ENCODE measurements at regions of chr7 and their contacts with region 1.

Region 1: GRCh38 chr7:101138213-101138870 is 11.4 kb downstream of the SERPINE1 start:
- DNase-seq: peak; percentile 91 to 98
- H3K4me3 ChIP-seq: peak overlapping the region in 1 of 2 donors; percentile 13
- H3K27ac ChIP-seq: peak overlapping the region; percentile 72 to 87
- H3K4me1 ChIP-seq: peaks cover 6 to 15% of the 10 kb centered on the region in 2 donors
- H3K27me3 ChIP-seq: no peaks in the 10 kb centered on the region
- CTCF ChIP-seq: peak; percentile 82 to 90 (median 85)

Region 2: DNA sequence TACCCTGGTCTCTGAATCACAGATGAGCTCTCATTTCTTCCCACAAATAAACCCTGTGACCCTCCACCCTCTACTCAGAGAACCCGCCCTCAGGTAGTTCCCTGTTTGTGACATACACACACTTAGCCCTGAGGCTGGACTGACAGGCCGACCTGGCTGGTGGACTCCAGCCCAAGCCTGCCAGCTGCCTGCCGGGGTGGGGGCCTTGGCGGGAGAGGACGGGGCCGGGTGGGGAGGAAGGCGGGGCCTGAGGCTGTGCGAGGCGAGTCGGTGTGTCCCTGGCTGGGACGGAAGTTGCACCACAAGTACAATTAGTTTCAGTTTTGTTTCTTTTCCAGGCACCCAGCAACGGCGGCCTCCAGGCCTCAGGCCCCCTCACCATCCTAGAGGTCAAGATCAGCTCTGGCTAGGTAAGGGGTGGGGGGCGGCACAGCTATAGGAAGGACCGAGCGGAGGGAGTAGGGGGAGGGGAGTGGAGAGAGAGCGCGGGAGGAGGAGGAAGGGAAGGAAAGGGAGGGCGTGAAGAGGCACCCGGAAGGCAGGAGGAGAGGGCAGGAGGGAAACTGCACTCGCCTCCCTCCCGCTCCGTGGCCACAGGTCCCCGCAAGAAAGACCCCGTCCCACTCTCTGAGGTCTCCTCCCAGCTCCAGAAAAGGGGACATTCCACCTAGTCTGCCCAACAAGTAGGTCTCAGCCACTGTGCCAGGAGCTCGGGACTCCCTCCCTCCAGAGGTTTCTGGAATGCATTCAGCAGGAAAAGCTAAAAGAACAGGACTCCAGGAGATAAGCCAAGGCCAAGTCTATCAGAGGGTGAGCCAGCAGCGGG is 53.0 kb before region 1 on chr7 and contains the start of gene TRIM56:
- intact Hi-C with region 1: loop called (anchors 1 kb)
- DNase-seq: peak; percentile 68 to 94
- H3K4me3 ChIP-seq: peak within 1 kb of the TSS; percentile 75 to 77
- H3K27ac ChIP-seq: peak within 1 kb of the TSS; percentile 88 to 92
- H3K4me1 ChIP-seq: peaks cover 6 to 27% of the 10 kb centered on the region in 2 donors
- H3K27me3 ChIP-seq: no peaks in the 10 kb centered on the region
- CTCF ChIP-seq: no peak
- total RNA-seq, gene TRIM56: 29.6 TPM

Region 3: GRCh38 chr7:101094416-101095375 is 43.6 kb before region 1 on chr7:
- intact Hi-C with region 1: loop called (anchors 1 kb)
- DNase-seq: peak in 1 of 2 donors; percentile 77
- H3K4me3 ChIP-seq: no peak overlapping the region
- H3K27ac ChIP-seq: peak overlapping the region; percentile 19 to 48
- H3K4me1 ChIP-seq: peaks cover 10 to 23% of the 10 kb centered on the region in 2 donors
- H3K27me3 ChIP-seq: no peaks in the 10 kb centered on the region
- CTCF ChIP-seq: peak; percentile 60 to 73 (median 67)

Region 4: DNA sequence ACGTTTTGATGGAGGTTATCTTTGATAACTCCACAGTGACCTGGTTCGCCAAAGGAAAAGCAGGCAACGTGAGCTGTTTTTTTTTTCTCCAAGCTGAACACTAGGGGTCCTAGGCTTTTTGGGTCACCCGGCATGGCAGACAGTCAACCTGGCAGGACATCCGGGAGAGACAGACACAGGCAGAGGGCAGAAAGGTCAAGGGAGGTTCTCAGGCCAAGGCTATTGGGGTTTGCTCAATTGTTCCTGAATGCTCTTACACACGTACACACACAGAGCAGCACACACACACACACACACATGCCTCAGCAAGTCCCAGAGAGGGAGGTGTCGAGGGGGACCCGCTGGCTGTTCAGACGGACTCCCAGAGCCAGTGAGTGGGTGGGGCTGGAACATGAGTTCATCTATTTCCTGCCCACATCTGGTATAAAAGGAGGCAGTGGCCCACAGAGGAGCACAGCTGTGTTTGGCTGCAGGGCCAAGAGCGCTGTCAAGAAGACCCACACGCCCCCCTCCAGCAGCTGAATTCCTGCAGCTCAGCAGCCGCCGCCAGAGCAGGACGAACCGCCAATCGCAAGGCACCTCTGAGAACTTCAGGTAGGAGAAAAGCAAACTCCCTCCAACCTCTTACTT is 11.6 kb before region 1 on chr7 and contains the start of gene SERPINE1:
- intact Hi-C with region 1: loop called (anchors 1 kb)
- DNase-seq: peak; percentile 93 to 99
- H3K4me3 ChIP-seq: peak within 1 kb of the TSS; percentile 56 to 71
- H3K27ac ChIP-seq: peak within 1 kb of the TSS; percentile 96 to 98
- H3K4me1 ChIP-seq: peaks cover 12 to 65% of the 10 kb centered on the region in 2 donors
- H3K27me3 ChIP-seq: no peaks in the 10 kb centered on the region
- CTCF ChIP-seq: peak in 1 of 3 experiments; percentile 24
- total RNA-seq, gene SERPINE1: 1,267 TPM

Region 5: GRCh38 chr7:101185258-101185839 is 47.0 kb after region 1 on chr7:
- intact Hi-C with region 1: no loop called
- DNase-seq: no peak
- H3K4me3 ChIP-seq: no peak overlapping the region
- H3K27ac ChIP-seq: no peak overlapping the region
- H3K4me1 ChIP-seq: no peaks in the 10 kb centered on the region
- H3K27me3 ChIP-seq: peaks cover 1% of the 10 kb centered on the region
- CTCF ChIP-seq: no peak

Region 6: DNA sequence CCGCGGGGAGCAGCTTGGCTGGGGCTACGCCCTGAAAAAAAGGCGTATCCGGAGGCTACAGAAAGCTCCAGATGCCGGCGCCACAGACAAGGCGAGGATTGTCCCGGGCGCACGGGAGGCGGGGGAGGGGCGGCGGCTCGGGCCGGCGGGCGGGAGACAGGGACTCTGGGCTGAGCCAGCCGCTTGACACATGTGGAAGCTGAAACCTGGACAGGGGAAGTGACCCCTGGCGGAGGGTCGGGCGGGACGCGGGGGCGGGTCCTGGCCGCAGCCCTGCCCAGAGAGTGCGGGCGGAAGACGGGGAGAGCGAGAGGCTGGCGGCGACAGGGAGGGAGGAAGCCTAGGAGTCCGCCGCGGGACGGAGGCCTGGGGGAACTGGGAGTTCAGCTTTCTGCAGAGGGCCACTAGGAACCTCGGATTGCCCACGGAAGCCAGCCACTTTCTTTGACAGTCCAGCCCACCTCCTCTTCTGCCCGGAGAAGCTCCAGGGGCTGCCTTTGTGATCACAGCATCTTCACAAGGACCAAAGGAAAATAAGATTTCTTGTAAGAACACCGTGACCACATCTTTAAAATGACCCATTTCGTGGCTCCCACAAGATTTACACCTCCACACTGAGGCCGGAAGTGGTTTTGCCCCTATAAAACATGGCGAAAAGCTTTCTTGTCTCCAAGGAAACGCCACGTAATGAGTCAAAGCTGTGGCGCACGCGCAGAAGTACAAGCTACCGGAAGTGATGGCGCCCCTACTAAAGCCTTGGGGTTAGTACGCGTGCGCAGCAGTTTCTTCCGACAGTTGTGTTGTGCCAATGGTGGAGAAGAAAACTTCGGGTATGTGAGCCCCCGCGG is 79.3 kb after region 1 on chr7 and contains the starts of genes PLOD3 and ZNHIT1:
- intact Hi-C with region 1: no loop called
- DNase-seq: peak; percentile 84 to 98
- H3K4me3 ChIP-seq: peak within 1 kb of the TSS; percentile 72 to 78
- H3K27ac ChIP-seq: peak within 1 kb of the TSS; percentile 55 to 78
- H3K4me1 ChIP-seq: peaks cover 9 to 18% of the 10 kb centered on the region in 2 donors
- H3K27me3 ChIP-seq: no peaks in the 10 kb centered on the region
- CTCF ChIP-seq: no peak
- total RNA-seq, gene PLOD3: 165 TPM
- total RNA-seq, gene ZNHIT1: 87.9 TPM

Region 7: GRCh38 chr7:101265622-101266516 is 127.5 kb after region 1 on chr7:
- intact Hi-C with region 1: no loop called
- DNase-seq: no peak
- H3K4me3 ChIP-seq: no peak overlapping the region
- H3K27ac ChIP-seq: no peak overlapping the region
- H3K4me1 ChIP-seq: no peaks in the 10 kb centered on the region
- H3K27me3 ChIP-seq: no peaks in the 10 kb centered on the region
- CTCF ChIP-seq: no peak

Measured in ascending aorta (tissue), 2 donors.